Activated CD4-positive, alpha-beta T cell treated with anti-CD3 and anti-CD28 coated beads for 36 hours (primary cell): ENCODE measurements at regions of chr1 and their contacts with region 1.

Region 1: GRCh38 chr1:17558954-17559614 is 19.6 kb downstream of the ARHGEF10L start:
- DNase-seq: no peak
- ATAC-seq: no peak
- H3K4me3 Mint-ChIP-seq: no peak overlapping the region
- H3K27ac Mint-ChIP-seq: no peak overlapping the region
- H3K4me1 Mint-ChIP-seq: no peaks in the 10 kb centered on the region
- H3K27me3 Mint-ChIP-seq: peaks cover 3% of the 10 kb centered on the region

Region 2: DNA sequence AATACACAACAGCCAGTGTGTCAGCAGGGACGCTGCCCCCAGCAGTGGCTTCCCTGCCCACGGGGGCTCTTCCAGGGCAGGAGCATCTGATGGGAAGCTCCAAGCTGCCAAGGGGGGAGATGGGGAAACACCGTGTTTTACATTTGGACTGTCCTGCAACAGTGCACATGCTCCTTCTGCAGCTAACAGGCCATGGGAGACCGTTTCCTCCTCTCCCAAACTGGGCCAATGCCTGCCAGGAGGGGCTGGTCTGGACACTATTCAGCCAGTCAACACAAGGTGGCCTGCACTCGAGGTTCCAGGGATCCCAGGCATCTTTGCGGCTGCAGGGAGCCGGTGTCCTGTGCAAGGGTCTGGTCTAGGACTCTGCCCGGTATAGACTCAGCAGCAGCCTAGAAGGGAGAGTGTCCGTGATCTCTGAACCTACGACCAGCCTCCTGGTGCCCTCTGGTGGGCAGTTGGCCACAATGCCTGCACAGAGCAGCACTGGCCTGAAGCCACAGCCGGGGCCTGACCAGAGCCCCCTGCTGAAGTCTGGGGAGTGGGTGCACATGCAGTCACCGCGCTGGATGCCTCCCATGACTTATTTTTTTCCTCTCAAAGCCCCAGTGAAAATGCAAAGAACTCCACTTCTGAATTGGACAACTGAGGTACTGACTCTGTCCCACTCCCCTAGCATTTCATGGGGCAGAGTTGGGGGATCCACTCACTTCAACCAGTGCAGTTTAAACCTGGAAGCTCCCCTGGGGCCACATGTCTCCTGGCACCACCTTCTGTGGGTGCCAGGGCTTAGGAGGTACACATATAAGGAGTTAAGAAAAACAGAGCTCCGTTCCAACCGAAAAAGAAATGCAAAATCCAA is 153.0 kb before region 1 on chr1:
- CTCF ChIA-PET with region 1: no interaction called
- POLR2A ChIA-PET with region 1: no interaction called
- intact Hi-C with region 1: no loop called
- DNase-seq: peak; percentile 72
- ATAC-seq: peak; percentile 86
- H3K4me3 Mint-ChIP-seq: no peak overlapping the region
- H3K27ac Mint-ChIP-seq: no peak overlapping the region
- H3K4me1 Mint-ChIP-seq: no peaks in the 10 kb centered on the region
- H3K27me3 Mint-ChIP-seq: no peaks in the 10 kb centered on the region

Region 3: GRCh38 chr1:17533201-17533600 is 25.9 kb before region 1 on chr1:
- CTCF ChIA-PET with region 1: no interaction called
- POLR2A ChIA-PET with region 1: no interaction called
- intact Hi-C with region 1: loop called in 1 of 2 experiments (anchors 1 kb)
- DNase-seq: no peak
- ATAC-seq: no peak
- H3K4me3 Mint-ChIP-seq: no peak overlapping the region
- H3K27ac Mint-ChIP-seq: no peak overlapping the region
- H3K4me1 Mint-ChIP-seq: no peaks in the 10 kb centered on the region
- H3K27me3 Mint-ChIP-seq: peaks cover 15% of the 10 kb centered on the region

Region 4: DNA sequence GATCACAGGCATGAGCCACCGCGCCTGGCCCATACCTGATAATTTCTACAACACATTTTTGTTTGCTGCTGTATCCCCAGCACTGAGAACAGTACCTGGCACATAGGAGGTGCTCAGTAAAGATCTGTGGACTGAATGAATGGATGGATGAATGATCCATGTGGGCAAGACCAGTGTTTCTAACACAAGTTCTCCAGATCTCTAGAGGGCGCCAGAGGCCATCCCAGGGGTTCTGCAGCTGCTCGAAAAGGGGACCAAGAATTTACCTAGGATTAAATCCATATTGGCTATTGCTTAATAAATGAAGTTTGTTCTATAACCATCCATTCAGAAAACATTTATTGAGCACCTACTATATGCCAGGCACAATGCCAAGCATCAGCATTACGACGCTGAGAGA is 363.7 kb after region 1 on chr1:
- CTCF ChIA-PET with region 1: no interaction called
- POLR2A ChIA-PET with region 1: no interaction called
- intact Hi-C with region 1: no loop called
- DNase-seq: peak; percentile 53
- ATAC-seq: no peak
- H3K4me3 Mint-ChIP-seq: no peak overlapping the region
- H3K27ac Mint-ChIP-seq: no peak overlapping the region
- H3K4me1 Mint-ChIP-seq: no peaks in the 10 kb centered on the region
- H3K27me3 Mint-ChIP-seq: peaks cover 28% of the 10 kb centered on the region